KBM-7 (cell line): ENCODE measurements at regions of chr1 and their contacts with region 1.

Region 1: DNA sequence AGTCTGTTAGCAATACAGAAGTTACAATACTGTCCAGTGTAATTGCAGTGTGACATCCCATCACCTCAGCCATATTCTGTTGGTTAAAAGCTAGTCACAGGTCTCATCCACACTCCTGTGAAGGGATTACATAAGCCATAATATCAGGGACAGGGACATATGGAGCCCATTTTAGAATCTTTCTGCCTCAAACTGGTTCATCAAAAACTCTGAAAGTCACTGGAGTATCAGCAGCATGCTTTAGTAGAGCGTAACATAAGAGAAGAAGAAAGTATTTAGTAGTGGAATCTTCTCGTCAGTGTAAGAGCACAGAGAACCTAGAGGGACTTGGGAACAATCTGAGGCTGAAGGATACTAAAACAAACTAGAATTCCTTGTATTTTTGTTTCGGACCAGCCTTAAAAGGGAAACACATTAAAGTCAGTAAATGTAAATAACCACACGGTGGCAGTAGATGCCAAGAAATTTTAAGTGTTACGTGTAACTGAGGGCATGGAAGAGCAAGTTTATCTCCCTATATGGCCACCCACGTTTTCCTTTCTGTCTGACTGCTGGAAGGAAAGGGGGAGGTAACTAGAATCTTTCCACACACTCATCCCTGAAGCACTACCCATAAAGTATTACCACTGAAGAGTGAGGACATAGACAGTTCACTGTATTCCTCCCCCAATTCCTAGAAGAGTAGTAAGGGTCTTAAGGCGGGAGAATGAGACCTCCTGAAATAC is 41.6 kb upstream of the AGL start:
- DNase-seq: peak; percentile 89

Region 2: GRCh38 chr1:99935534-99935933 is 127.0 kb after region 1 on chr1:
- in situ Hi-C with region 1: no loop called
- DNase-seq: no peak

Region 3: GRCh38 chr1:100037927-100038659 is 229.5 kb after region 1 on chr1:
- in situ Hi-C with region 1: loop called (anchors 25 kb)
- DNase-seq: peak; percentile 82

Region 4: GRCh38 chr1:100459358-100460114 is 651.0 kb after region 1 on chr1:
- in situ Hi-C with region 1: loop called (anchors 25 kb)
- DNase-seq: peak; percentile 80

Region 5: GRCh38 chr1:100895540-100896483 is 1087.3 kb after region 1 on chr1 and contains the start of gene SLC30A7:
- in situ Hi-C with region 1: loop called (anchors 25 kb)
- DNase-seq: peak; percentile 90